Prostate gland (tissue), 2 donors: ENCODE measurements at regions of chr9 and their contacts with region 1.

Region 1: GRCh38 chr9:124040935-124041816 is 29.6 kb downstream of the LHX2 start:
- DNase-seq: peak; percentile 30
- H3K4me3 ChIP-seq: peak overlapping the region; percentile 15 to 29
- H3K27ac ChIP-seq: no peak overlapping the region
- H3K4me1 ChIP-seq: peaks cover 6% of the 10 kb centered on the region
- H3K27me3 ChIP-seq: no peaks in the 10 kb centered on the region
- CTCF ChIP-seq: peak; percentile 87 to 98 (median 92)
- POLR2A ChIP-seq: no peak

Region 2: GRCh38 chr9:123401879-123402513 is 639.2 kb before region 1 on chr9:
- intact Hi-C with region 1: loop called (anchors 2 kb)
- DNase-seq: no peak
- H3K4me3 ChIP-seq: no peak overlapping the region
- H3K27ac ChIP-seq: peak overlapping the region; percentile 8 to 12
- H3K4me1 ChIP-seq: no peaks in the 10 kb centered on the region
- H3K27me3 ChIP-seq: no peaks in the 10 kb centered on the region
- CTCF ChIP-seq: peak in 3 of 4 experiments; percentile 37 to 60 (median 57)
- POLR2A ChIP-seq: no peak

Region 3: DNA sequence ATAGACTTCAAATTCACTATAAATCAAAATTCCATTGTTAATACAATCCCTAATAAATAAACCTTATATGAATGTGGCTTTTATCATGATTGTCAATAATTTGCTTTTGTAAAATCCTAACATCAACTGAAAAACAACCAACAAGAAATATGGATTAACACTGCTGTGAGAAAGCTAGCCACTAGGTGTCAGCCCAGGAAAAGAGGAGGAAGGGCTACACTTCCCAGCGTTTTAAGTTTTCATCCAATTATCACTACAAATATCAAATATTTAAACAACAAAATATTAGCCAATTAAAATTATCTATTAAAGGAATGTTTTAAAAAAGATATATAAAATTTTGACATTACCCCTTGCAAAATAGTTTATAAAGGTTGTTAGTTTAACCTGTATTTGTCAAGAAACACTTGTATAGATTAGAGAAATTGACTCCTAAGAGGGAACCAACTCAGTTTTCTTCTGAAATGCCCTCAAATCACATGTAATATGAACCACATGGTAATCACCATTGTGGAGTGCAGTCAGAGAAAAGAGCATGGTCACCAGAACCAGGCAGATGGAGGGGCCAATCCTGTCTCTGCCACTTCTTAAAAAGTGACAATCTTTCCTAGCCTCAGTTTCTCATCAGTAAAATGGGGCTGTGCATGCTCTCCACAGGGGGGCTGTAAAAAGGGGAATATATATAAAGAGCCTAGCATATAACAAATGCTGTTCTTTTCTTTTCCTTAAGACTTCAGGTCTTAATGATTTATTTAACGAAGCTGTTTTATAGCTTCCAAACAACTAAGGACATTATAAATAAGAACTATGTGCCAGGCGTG is 497.0 kb before region 1 on chr9:
- intact Hi-C with region 1: loop called (anchors 5 kb)
- DNase-seq: no peak
- H3K4me3 ChIP-seq: no peak overlapping the region
- H3K27ac ChIP-seq: no peak overlapping the region
- H3K4me1 ChIP-seq: no peaks in the 10 kb centered on the region
- H3K27me3 ChIP-seq: no peaks in the 10 kb centered on the region
- CTCF ChIP-seq: peak; percentile 41 to 78 (median 70)
- POLR2A ChIP-seq: no peak

Region 4: DNA sequence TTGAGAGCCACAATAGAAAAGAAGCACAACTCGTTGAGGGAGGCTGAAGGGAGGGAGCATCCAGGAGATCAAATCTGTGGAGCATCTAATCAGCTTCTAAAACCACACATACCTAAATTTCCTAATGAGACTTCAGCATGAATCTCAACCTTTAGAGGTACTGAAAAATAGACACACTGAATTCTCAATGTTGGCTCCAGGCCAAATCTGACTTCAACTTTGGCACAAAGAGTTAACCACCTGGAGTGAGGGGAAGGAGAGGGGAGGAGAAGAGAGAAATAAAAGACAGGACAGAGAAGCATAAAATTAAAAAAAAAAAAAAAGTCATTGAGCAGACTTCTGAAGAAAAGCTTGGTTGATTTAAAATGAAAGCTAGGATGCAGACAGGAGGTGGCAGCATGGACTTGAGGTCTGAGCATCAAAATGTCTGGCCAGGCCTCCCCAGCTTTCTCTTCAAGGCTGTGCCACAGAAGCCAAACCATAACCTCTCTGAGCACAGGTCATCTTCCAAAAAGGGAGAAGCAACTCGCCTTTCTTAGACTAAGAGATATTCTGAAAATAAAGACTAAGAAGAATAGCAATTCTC is 316.9 kb before region 1 on chr9:
- intact Hi-C with region 1: loop called (anchors 2 kb)
- DNase-seq: no peak
- H3K4me3 ChIP-seq: no peak overlapping the region
- H3K27ac ChIP-seq: no peak overlapping the region
- H3K4me1 ChIP-seq: no peaks in the 10 kb centered on the region
- H3K27me3 ChIP-seq: no peaks in the 10 kb centered on the region
- CTCF ChIP-seq: peak in 1 of 4 experiments; percentile 6
- POLR2A ChIP-seq: no peak